Activated CD8-positive, alpha-beta T cell treated with anti-CD3 and anti-CD28 coated beads, Interleukin-2, amount 10 ng/mL, durations not matched to agents 7 days and 5 days (primary cell): ENCODE measurements at regions of chr16 and their contacts with region 1.

Region 1: DNA sequence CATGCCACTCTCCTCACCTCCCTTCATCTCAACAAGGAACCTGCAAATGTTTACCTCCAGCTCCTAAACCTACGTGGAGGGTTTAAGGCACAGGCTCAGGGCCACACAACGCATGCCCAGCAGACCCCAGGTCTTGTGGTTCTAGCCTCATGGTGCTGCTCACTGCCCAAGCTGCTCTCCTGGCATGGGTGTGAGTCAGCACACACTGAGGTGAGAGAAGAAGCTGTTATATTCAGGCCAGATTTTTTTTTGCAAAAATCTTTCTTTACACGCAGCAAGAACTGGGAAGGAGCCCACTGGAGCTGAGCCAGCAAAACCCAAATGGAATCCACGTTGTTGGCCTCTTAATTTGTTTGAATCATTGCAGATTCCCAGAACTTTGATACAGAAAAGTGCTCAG is 5.5 kb upstream of the C16orf96 start:
- DNase-seq: no peak
- ATAC-seq: no peak
- H3K4me3 Mint-ChIP-seq: no peak overlapping the region
- H3K27ac Mint-ChIP-seq: no peak overlapping the region
- H3K4me1 Mint-ChIP-seq: peaks cover 16% of the 10 kb centered on the region
- H3K27me3 Mint-ChIP-seq: peaks cover 12% of the 10 kb centered on the region

Region 2: DNA sequence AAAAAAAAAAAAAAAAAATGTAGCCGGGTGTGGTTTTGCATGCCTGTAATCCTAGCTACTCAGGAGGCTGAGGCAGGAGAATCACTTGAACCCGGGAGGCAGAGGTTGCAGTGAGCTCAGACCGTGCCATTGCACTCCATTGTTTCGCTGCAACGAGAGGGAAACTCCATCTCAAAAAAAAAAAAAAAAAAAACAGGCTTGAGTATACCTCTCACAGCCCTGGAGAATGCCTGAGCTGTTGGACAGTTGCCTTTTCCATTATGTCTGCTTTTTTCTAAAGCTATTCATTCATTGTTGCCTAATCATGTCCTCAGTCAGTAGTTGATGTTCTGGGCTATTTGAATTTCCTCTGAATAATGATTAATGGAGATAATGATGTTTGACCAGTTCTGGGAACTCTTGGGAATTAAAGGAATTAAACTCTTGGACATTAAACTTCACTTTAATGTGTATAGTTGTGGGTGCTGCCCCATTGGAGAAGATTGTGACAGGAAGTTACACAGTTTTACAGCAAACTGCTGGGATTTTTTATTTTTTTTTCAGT is 62.6 kb before region 1 on chr16:
- CTCF ChIA-PET with region 1: interaction called, 16 read pairs
- POLR2A ChIA-PET with region 1: no interaction called
- DNase-seq: peak; percentile 35
- ATAC-seq: peak; percentile 68
- H3K4me3 Mint-ChIP-seq: peak overlapping the region; percentile 64
- H3K27ac Mint-ChIP-seq: peak overlapping the region; percentile 92
- H3K4me1 Mint-ChIP-seq: peaks cover 62% of the 10 kb centered on the region
- H3K27me3 Mint-ChIP-seq: no peaks in the 10 kb centered on the region

Region 3: GRCh38 chr16:4538350-4539235 is 12.0 kb before region 1 on chr16 and contains the start of gene CDIP1:
- CTCF ChIA-PET with region 1: interaction called, 35 read pairs
- POLR2A ChIA-PET with region 1: no interaction called
- DNase-seq: peak; percentile 97
- ATAC-seq: peak; percentile 85
- H3K4me3 Mint-ChIP-seq: peak within 1 kb of the TSS; percentile 80
- H3K27ac Mint-ChIP-seq: peak within 1 kb of the TSS; percentile 84
- H3K4me1 Mint-ChIP-seq: peaks cover 36% of the 10 kb centered on the region
- H3K27me3 Mint-ChIP-seq: no peaks in the 10 kb centered on the region
- total RNA-seq, gene CDIP1: 44.0 to 48.7 TPM

Region 4: DNA sequence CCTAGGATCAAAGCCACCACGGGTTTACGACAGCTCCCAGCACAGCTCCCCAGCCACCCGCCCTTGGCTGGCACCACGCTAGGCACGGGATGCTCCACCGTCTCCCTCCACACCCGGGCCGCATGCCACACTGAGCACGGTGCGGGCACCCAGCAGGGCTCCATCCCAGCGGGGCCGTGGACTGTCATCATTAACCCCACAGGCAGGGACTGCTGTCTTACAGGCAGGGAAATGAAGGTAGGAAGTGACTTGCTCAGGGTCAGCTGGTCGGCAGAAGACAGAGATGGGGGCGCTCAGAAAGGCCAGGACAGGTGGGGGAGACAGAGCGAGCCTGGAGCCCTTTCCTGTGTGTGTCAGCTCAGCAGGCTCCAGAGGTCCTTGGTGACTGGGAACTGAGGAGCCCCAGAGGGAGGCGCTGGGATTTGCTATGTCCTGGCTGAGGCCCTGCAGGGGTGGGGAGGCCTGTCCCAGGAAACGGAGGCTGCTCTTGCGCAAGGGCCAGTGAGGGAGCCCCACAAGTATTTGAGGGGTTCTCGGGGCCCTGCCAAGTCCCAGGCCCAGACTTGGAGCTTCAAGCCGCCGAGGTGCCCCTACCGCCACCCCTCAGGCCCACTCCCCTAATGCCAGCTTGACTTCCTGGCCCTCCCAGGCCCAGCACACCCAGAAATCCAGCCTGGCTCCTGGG is 60.9 kb after region 1 on chr16:
- CTCF ChIA-PET with region 1: no interaction called
- POLR2A ChIA-PET with region 1: no interaction called
- DNase-seq: no peak
- ATAC-seq: no peak
- H3K4me3 Mint-ChIP-seq: no peak overlapping the region
- H3K27ac Mint-ChIP-seq: no peak overlapping the region
- H3K4me1 Mint-ChIP-seq: peaks cover 22% of the 10 kb centered on the region
- H3K27me3 Mint-ChIP-seq: no peaks in the 10 kb centered on the region